IMR-90 (cell line): ENCODE measurements at regions of chr16 and their contacts with region 1.

Region 1: GRCh38 chr16:89217388-89218191 is at the start of gene ZNF778:
- DNase-seq: peak; percentile 77
- ATAC-seq: peak; percentile 94
- H3K4me3 ChIP-seq: peak within 1 kb of the TSS; percentile 98
- H3K27ac ChIP-seq: peak within 1 kb of the TSS; percentile 99
- H3K4me1 ChIP-seq: no peaks in the 10 kb centered on the region
- H3K27me3 ChIP-seq: no peaks in the 10 kb centered on the region
- CTCF ChIP-seq: no peak
- POLR2A ChIP-seq: peak; percentile 92
- RAD21 ChIP-seq: peak; percentile 10; the same call in 1 of the 2 replicates
- total RNA-seq, gene ZNF778: 8.3 and 9.9 TPM in 2 replicates

Region 2: GRCh38 chr16:88811769-88812512 is 405.6 kb before region 1 on chr16 and contains the start of gene APRT:
- CTCF ChIA-PET with region 1: no interaction called
- POLR2A ChIA-PET with region 1: no interaction called
- dilution Hi-C with region 1: no loop called
- in situ Hi-C with region 1: no loop called
- intact Hi-C with region 1: loop called (anchors 5 kb)
- DNase-seq: peak; percentile 95
- ATAC-seq: peak; percentile 87
- H3K4me3 ChIP-seq: peak within 1 kb of the TSS; percentile 60
- H3K27ac ChIP-seq: peak within 1 kb of the TSS; percentile 84
- H3K4me1 ChIP-seq: peaks cover 12% of the 10 kb centered on the region
- H3K27me3 ChIP-seq: no peaks in the 10 kb centered on the region
- CTCF ChIP-seq: peak; percentile 53
- POLR2A ChIP-seq: peak; percentile 87
- RAD21 ChIP-seq: peak; percentile 52
- total RNA-seq, gene APRT: 40.5 and 41.7 TPM in 2 replicates

Region 3: GRCh38 chr16:88856828-88857733 is 360.5 kb before region 1 on chr16 and contains the starts of genes GALNS and TRAPPC2L:
- CTCF ChIA-PET with region 1: no interaction called
- POLR2A ChIA-PET with region 1: no interaction called
- dilution Hi-C with region 1: no loop called
- in situ Hi-C with region 1: no loop called
- intact Hi-C with region 1: loop called (anchors 2 kb)
- DNase-seq: peak; percentile 91
- ATAC-seq: peak; percentile 98
- H3K4me3 ChIP-seq: peak within 1 kb of the TSS; percentile 97
- H3K27ac ChIP-seq: peak within 1 kb of the TSS; percentile 86
- H3K4me1 ChIP-seq: peaks cover 9% of the 10 kb centered on the region
- H3K27me3 ChIP-seq: no peaks in the 10 kb centered on the region
- CTCF ChIP-seq: no peak
- POLR2A ChIP-seq: peak; percentile 80
- RAD21 ChIP-seq: no peak
- total RNA-seq, gene GALNS: 7.2 TPM in 2 replicates
- total RNA-seq, gene TRAPPC2L: 84.2 and 102 TPM in 2 replicates

Region 4: GRCh38 chr16:88939972-88940861 is 277.4 kb before region 1 on chr16:
- CTCF ChIA-PET with region 1: no interaction called
- POLR2A ChIA-PET with region 1: no interaction called
- dilution Hi-C with region 1: no loop called
- in situ Hi-C with region 1: loop called (anchors 10 kb)
- intact Hi-C with region 1: no loop called
- DNase-seq: no peak
- ATAC-seq: no peak
- H3K4me3 ChIP-seq: no peak overlapping the region
- H3K27ac ChIP-seq: no peak overlapping the region
- H3K4me1 ChIP-seq: no peaks in the 10 kb centered on the region
- H3K27me3 ChIP-seq: peaks cover 79% of the 10 kb centered on the region
- CTCF ChIP-seq: no peak
- POLR2A ChIP-seq: no peak
- RAD21 ChIP-seq: no peak

Region 5: DNA sequence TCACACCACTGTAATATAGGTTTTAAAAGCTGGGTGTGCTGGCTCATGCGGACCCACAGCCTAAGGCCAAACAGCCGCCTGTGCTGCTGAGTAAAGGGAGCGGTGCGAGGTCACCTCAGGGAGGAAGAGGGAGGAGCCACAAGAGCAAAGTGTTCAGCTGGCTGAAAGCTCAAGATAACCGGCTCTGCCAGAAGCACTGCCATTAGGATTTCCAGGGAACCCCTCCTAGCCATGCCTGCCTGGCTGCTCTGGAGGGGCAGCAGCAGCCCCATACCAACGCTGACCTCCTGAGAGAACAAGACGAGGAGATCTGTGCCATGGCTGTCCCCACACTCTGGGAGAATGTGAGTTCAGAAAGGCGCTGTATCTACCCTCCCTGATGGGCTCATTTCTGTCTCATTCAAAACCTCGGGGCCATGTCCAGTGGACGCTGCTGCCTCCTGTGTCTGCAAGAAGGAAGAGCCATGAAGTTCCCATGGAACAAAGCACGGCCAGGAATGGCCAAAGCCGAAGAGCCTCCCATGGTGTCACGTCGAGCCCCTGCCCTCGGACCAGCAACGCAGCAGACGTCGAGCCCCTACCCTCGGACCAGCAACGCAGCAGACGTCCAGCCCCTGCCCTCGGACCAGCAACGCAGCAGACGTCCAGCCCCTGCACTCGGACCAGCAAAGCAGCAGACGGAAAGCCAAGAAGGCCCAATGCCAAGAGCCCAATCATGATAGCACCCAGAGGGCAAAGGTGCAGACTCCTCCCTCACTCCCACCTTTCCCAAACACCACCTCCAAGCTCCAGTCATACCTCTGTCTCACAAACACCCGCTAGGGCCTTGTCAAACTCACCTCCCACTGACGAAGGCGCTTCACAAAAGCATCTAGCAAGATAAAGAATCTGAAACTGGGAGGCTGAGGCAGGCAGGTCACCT is 165.8 kb after region 1 on chr16:
- CTCF ChIA-PET with region 1: no interaction called
- POLR2A ChIA-PET with region 1: no interaction called
- dilution Hi-C with region 1: no loop called
- in situ Hi-C with region 1: no loop called
- intact Hi-C with region 1: no loop called
- DNase-seq: peak; percentile 47
- ATAC-seq: peak; percentile 80
- H3K4me3 ChIP-seq: no peak overlapping the region
- H3K27ac ChIP-seq: no peak overlapping the region
- H3K4me1 ChIP-seq: peaks cover 14% of the 10 kb centered on the region
- H3K27me3 ChIP-seq: no peaks in the 10 kb centered on the region
- CTCF ChIP-seq: no peak
- POLR2A ChIP-seq: no peak
- RAD21 ChIP-seq: no peak

Region 6: DNA sequence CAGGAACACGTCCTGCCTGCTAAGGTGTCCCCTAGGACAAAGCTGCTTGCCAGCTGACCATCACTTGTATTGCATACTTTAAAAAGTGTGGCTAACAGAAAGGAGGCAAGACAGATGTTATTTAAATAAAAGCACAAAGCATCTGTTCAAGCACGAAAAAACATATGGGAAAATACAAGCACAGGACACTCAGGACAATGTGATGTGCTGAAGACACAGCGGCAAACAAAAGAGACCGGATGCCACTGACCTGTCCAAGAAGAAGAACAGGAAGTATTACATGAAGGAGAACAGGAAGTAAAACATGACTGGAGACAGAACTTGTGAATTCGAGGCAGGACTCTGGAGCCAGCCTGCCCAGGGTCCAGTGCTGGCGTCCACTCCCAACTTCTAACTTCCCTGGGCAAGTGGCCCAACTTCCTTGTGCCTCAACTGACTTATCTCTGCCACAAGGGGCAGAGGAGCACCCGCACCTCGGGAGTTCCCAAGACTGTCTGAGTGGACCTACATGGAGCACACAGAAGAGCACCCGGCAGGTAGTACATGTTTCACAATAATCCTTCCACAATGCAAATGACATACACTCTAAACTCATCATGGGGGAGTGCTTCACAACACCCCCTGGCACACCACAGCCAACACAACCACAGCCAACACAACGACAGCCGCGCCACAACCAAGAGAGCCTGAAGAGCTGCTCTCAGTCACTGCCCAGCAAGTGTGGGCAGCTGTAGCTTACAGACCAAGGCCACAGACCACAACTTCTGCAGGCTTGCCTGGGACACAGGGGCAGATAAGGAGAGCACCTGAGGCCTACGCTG is 236.1 kb after region 1 on chr16:
- CTCF ChIA-PET with region 1: no interaction called
- POLR2A ChIA-PET with region 1: no interaction called
- dilution Hi-C with region 1: no loop called
- in situ Hi-C with region 1: no loop called
- intact Hi-C with region 1: no loop called
- DNase-seq: no peak
- ATAC-seq: 0 out of 2 replicates have a peak, but pooled peaks have one; percentile 19
- H3K4me3 ChIP-seq: no peak overlapping the region
- H3K27ac ChIP-seq: no peak overlapping the region
- H3K4me1 ChIP-seq: peaks cover 24% of the 10 kb centered on the region
- H3K27me3 ChIP-seq: no peaks in the 10 kb centered on the region
- CTCF ChIP-seq: peak; percentile 22; the same call in 1 of the 2 replicates
- POLR2A ChIP-seq: no peak
- RAD21 ChIP-seq: no peak